ENCODE measurements at regions of chr16 and their contacts with region 1.

Region 1: DNA sequence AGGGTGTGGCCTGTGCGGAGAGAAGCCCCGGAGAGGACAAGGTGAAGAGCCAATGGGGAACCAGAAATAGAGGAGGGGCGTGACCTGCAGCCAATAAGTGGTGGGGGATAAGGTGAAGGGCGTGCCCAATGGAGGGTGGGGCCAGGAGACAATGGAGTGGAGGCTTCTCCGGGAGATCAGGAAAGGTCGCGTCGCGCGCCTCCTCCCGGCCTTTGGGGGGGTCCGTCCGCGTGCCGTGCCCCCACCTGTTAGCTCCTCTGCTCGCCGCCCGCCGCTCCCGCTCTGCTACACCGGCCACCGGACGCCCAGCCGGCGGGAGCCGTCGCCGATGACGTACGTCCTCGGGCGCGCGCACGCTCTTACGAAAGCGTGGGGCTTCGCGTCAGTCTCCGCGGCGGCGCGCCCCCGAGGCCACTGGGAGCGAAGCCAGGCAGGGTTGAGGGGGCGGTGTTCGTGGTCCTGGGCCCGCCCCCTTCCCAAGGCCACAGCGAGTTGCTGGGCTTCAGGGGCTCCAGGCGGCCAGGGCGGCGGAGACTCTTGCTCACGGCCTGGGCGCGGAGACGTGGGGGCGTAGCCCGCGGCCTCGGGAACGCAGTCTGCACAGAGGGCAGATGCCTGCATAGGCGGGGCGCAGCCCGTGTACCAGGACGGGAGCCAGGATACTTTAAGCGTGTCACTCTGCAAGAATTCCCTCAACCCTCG is at the start of gene MATCAP1:
- DNase-seq: peak; percentile 83 to 98 (median 89)
- ATAC-seq: peak; percentile 94
- H3K4me3 ChIP-seq: peak within 1 kb of the TSS; percentile 86
- H3K4me3 Mint-ChIP-seq: peak within 1 kb of the TSS; percentile 94
- H3K27ac ChIP-seq: peak within 1 kb of the TSS; percentile 87 to 89
- H3K27ac Mint-ChIP-seq: peak within 1 kb of the TSS; percentile 90
- H3K4me1 ChIP-seq: peaks cover 27% of the 10 kb centered on the region
- H3K4me1 Mint-ChIP-seq: peaks cover 16% of the 10 kb centered on the region
- H3K27me3 ChIP-seq: peaks cover 0 to 6% of the 10 kb centered on the region in 2 experiments
- H3K27me3 Mint-ChIP-seq: peaks cover 4% of the 10 kb centered on the region
- CTCF ChIP-seq: no peak
- total RNA-seq, gene MATCAP1: 9.7 to 10.6 TPM

Region 2: DNA sequence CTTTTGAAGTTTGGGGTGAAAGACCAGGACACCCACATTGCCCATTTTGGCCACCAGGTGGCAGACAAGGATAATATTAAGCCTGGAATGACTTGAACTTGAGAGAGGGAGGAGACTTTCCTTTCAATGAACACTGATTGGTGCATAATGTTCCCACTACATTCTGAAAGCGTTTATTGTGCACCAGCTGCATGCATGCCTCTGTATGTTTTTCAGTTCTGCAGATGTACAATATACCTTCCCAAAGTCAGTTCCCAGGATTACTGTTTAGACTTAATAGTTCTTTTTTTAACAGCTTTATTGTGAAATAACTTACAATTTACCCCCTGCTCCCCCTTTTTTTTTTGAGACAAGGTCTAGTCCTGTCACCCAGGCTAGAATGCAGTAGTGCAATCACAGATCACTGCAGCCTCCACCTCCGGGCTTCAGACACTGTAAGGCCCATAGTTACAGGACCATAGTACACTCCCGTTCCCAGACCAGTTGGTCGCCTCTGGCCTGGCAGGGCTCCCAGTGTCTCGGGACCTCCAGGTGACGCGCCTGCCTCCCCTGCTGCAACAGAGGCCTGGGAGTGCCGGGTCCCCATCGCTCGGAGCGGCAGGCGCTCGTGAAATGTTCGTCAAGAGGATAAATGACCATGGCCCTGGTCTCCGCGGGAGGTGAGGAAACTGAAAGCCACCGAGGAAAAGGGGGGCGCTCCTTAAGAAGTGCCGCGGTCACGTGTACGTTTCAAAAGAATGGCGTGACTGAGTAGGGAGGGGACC is 236.3 kb before region 1 on chr16:
- CTCF ChIA-PET with region 1: interaction called, 3 read pairs
- POLR2A ChIA-PET with region 1: no interaction called
- intact Hi-C with region 1: loop called in 1 of 2 experiments (anchors 2 kb)
- DNase-seq: peak; percentile 65 to 90 (median 82)
- ATAC-seq: peak; percentile 97
- H3K4me3 ChIP-seq: peak overlapping the region; percentile 64
- H3K4me3 Mint-ChIP-seq: peak overlapping the region; percentile 89
- H3K27ac ChIP-seq: no peak overlapping the region
- H3K27ac Mint-ChIP-seq: peak overlapping the region; percentile 2
- H3K4me1 ChIP-seq: peaks cover 24% of the 10 kb centered on the region
- H3K4me1 Mint-ChIP-seq: peaks cover 20% of the 10 kb centered on the region
- H3K27me3 ChIP-seq: peaks cover 19 to 22% of the 10 kb centered on the region in 2 experiments
- H3K27me3 Mint-ChIP-seq: peaks cover 50% of the 10 kb centered on the region
- CTCF ChIP-seq: peak; percentile 81

Region 3: GRCh38 chr16:66954097-66954659 is 229.6 kb before region 1 on chr16:
- CTCF ChIA-PET with region 1: interaction called, 5 read pairs
- POLR2A ChIA-PET with region 1: no interaction called
- intact Hi-C with region 1: loop called in 1 of 2 experiments (anchors 1 kb)
- DNase-seq: peak; percentile 52 to 83 (median 68)
- ATAC-seq: peak; percentile 95
- H3K4me3 ChIP-seq: no peak overlapping the region
- H3K4me3 Mint-ChIP-seq: no peak overlapping the region
- H3K27ac ChIP-seq: no peak overlapping the region
- H3K27ac Mint-ChIP-seq: no peak overlapping the region
- H3K4me1 ChIP-seq: peaks cover 5% of the 10 kb centered on the region
- H3K4me1 Mint-ChIP-seq: peaks cover 4% of the 10 kb centered on the region
- H3K27me3 ChIP-seq: peaks cover 15 to 17% of the 10 kb centered on the region in 2 experiments
- H3K27me3 Mint-ChIP-seq: peaks cover 47% of the 10 kb centered on the region
- CTCF ChIP-seq: peak; percentile 79

Region 4: DNA sequence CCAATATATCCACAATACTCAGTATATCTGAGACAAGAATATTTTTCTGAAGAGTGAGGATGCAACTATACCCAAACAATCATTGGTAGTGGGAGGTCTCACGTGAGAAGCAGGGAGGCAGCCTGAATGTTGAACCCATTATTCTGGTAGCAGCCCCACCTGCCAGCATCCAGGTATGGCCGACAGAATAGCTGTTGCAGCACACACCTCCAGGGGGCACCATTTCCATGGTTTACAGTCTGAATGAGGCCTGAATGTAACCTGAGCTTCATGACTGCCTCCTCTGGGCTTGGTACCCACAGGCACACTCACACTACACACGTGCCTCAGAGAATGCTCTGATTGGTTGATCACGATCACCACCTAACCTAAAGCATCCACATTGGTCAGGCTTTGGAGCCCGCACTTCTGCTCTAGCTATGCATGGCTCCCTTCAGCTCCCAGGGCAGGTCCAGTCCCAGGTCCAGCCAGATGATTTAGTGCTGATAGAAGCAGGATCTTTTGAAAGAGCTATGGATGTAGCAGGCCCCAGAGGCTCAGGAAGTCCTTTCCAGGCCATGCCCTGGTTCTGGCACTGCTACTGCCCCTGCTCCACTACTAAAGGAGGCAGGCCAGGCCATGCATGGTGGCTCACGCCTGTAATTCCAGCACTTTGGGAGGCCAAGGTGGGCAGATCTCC is 165.8 kb before region 1 on chr16:
- CTCF ChIA-PET with region 1: interaction called, 18 read pairs
- POLR2A ChIA-PET with region 1: interaction called, 5 read pairs
- intact Hi-C with region 1: loop called (anchors 5 to 10 kb)
- DNase-seq: peak; percentile 74 to 93 (median 79)
- ATAC-seq: peak; percentile 90
- H3K4me3 ChIP-seq: no peak overlapping the region
- H3K4me3 Mint-ChIP-seq: peak overlapping the region; percentile 1
- H3K27ac ChIP-seq: no peak overlapping the region
- H3K27ac Mint-ChIP-seq: no peak overlapping the region
- H3K4me1 ChIP-seq: peaks cover 26% of the 10 kb centered on the region
- H3K4me1 Mint-ChIP-seq: no peaks in the 10 kb centered on the region
- H3K27me3 ChIP-seq: peaks cover 0 to 2% of the 10 kb centered on the region in 2 experiments
- H3K27me3 Mint-ChIP-seq: no peaks in the 10 kb centered on the region
- CTCF ChIP-seq: peak; percentile 50

Region 5: DNA sequence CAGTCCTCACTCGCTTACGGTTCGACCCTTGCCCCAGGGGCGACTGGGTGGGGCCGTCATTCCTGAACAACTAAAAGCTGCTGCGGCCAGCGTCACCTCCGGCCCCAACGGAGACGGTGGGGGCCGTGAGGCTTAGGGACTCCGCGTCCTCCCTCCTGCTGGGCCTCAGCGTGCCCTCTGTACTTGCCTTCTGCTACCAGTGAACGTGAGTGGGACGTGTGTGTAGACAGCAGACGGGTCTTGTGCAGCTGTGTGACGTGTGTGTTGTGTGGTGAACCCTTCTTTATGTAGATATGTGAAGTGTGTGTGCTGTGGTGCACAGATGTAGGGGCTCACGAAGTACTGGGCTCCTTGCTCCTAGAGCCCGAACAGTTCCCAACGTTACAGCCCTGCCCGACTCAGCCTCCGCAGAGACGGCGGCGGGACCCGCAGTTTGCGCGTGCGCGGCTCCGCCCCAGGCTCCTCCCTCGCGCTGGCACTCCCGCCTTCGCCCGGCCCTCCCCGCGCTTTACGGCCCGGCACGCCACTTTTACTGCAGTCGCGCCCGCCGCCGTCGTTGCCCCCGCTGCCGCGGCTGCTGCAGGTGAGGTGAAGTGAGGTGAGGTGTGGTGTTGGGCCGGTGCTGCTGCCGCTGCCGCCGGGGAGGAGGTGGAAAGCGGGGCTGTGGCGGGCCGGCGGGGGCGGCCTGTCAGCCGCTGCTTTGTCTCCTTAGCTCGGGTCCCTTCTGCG is 74.2 kb before region 1 on chr16 and contains the start of gene PHAF1:
- CTCF ChIA-PET with region 1: no interaction called
- POLR2A ChIA-PET with region 1: no interaction called
- intact Hi-C with region 1: loop called in 1 of 2 experiments (anchors 5 kb)
- DNase-seq: peak; percentile 92 to 98 (median 96)
- ATAC-seq: peak; percentile 88
- H3K4me3 ChIP-seq: peak within 1 kb of the TSS; percentile 88
- H3K4me3 Mint-ChIP-seq: peak within 1 kb of the TSS; percentile 96
- H3K27ac ChIP-seq: peak within 1 kb of the TSS; percentile 26 to 29
- H3K27ac Mint-ChIP-seq: peak within 1 kb of the TSS; percentile 84
- H3K4me1 ChIP-seq: peaks cover 24% of the 10 kb centered on the region
- H3K4me1 Mint-ChIP-seq: peaks cover 26% of the 10 kb centered on the region
- H3K27me3 ChIP-seq: no peaks in the 10 kb centered on the region
- H3K27me3 Mint-ChIP-seq: no peaks in the 10 kb centered on the region
- CTCF ChIP-seq: no peak
- total RNA-seq, gene PHAF1: 10.6 to 10.8 TPM

Measured in CD4-positive, alpha-beta T cell (primary cell).